ENCODE measurements at regions of chr18 and their contacts with region 1.

Region 1: DNA sequence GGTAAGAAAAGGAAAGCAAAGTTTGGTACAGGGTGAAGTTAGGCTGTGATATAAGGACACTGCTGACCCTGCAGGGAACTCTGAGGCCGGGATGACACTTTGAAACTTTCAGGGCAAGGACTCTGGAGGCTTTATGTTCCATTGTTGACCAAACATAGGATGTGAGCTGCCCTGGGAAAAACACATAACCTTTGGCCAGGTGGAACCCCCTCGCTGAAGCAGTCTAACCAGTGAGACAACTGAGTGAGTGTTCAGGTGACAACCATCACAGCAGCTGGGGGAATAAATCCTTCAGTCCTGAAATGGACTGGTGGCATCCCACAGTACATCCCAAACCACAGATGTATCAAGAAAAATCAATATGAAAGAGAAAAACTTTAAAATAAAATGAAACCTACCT is 280.9 kb upstream of the CDH2 start:
- DNase-seq: no peak

Region 2: GRCh38 chr18:28469946-28470345 is 12.2 kb after region 1 on chr18:
- intact Hi-C with region 1: loop called in 1 of 2 experiments (anchors 1 kb)
- DNase-seq: no peak

Region 3: DNA sequence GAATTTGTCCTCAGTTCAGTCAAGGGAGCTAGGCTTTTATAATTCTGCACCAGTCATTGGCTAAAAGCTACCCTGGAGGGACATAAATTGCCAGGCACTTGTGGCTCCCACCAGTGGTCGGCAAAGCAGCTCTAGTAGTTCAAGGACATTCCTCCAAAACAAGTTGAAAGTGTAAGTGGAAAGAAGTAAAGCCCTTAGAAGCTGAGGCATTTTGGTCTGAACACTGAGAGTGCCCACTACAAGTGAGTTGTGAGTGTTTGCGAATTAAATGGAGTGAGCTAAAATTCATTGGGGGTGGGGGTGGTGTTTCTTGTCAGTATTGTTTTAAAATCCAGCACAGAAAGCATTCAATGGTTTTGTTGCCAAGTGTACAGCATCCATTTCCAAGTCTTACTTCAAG is 599.0 kb after region 1 on chr18:
- intact Hi-C with region 1: no loop called
- DNase-seq: no peak

Measured in posterior vena cava (tissue), 2 donors.